CD4-positive, alpha-beta memory T cell (primary cell): ENCODE measurements at regions of chr6 and their contacts with region 1.

Region 1: GRCh38 chr6:32127717-32128592 is at the start of gene ATF6B:
- DNase-seq: peak; percentile 92 to 100 (median 98)
- H3K4me3 ChIP-seq: peak within 1 kb of the TSS; percentile 74 to 87
- H3K4me3 Mint-ChIP-seq: peak within 1 kb of the TSS; percentile 97 to 100 (median 99)
- H3K27ac ChIP-seq: peak within 1 kb of the TSS; percentile 83
- H3K27ac Mint-ChIP-seq: peak within 1 kb of the TSS; percentile 89 to 99 (median 99)
- H3K4me1 ChIP-seq: peaks cover 35% of the 10 kb centered on the region
- H3K4me1 Mint-ChIP-seq: peaks cover 33 to 57% (median 46%) of the 10 kb centered on the region in 4 donors
- H3K27me3 ChIP-seq: no peaks in the 10 kb centered on the region
- H3K27me3 Mint-ChIP-seq: peaks cover 0 to 2% of the 10 kb centered on the region in 2 donors
- total RNA-seq, gene ATF6B: 151 to 154 TPM

Region 2: DNA sequence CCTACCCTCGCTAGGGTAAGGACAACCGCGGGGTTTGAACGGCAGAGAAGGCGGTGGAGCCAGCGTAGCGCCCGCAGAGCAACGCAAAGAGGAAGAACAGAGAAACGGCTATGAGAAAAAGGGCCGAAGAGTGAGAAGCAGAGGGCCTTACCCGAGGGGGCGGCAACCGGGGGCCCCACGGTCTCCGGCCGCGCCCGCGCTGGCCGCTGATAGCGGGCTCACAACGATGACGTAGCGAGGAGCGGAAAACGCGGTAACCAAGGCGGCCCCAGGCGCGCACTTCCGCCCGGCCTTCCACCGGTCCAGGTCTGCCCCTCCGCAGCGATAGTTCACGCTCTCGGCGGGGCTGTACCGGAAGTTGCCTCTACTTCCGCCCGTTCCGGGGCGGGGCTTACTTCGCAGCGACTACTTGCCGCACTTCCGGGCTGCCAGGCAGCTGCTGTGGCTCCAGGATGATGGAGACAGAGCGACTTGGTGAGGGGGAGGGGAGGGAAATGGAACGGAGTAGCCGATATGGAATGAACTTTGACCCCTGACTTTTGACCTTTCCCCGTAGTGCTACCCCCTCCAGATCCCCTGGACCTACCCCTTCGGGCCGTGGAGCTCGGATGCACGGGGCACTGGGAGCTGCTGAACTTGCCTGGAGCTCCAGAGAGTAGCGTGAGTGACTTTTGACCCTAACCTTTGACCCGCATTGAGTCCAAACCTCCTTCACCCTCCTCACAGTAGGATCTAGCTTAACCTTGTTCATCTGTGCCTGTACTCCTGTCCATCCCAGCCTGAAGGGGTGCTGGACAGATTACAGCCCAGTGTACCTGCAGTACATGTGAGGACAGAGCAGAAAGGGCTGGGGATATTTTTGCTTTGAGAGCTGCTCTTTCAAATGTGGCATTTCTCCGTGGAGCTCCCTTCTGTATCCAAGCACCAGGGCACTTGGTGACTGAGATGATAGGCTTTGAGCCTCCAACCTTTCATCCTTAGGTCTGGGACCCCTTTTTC is 168.9 kb before region 1 on chr6 and contains the starts of genes NELFE and SKIC2:
- CTCF ChIA-PET with region 1: no interaction called
- POLR2A ChIA-PET with region 1: interaction called, 3 read pairs
- intact Hi-C with region 1: loop called (anchors 1 kb)
- DNase-seq: peak; percentile 98 to 99 (median 99)
- H3K4me3 ChIP-seq: peak within 1 kb of the TSS; percentile 95
- H3K4me3 Mint-ChIP-seq: peak within 1 kb of the TSS; percentile 92 to 98 (median 96)
- H3K27ac ChIP-seq: peak within 1 kb of the TSS; percentile 98
- H3K27ac Mint-ChIP-seq: peak within 1 kb of the TSS; percentile 97 to 99 (median 98)
- H3K4me1 ChIP-seq: peaks cover 35% of the 10 kb centered on the region
- H3K4me1 Mint-ChIP-seq: peaks cover 21 to 43% (median 32%) of the 10 kb centered on the region in 4 donors
- H3K27me3 ChIP-seq: no peaks in the 10 kb centered on the region
- H3K27me3 Mint-ChIP-seq: no peaks in the 10 kb centered on the region
- total RNA-seq, gene NELFE: 45.8 to 49.0 TPM
- total RNA-seq, gene SKIC2: 117 to 119 TPM

Region 3: DNA sequence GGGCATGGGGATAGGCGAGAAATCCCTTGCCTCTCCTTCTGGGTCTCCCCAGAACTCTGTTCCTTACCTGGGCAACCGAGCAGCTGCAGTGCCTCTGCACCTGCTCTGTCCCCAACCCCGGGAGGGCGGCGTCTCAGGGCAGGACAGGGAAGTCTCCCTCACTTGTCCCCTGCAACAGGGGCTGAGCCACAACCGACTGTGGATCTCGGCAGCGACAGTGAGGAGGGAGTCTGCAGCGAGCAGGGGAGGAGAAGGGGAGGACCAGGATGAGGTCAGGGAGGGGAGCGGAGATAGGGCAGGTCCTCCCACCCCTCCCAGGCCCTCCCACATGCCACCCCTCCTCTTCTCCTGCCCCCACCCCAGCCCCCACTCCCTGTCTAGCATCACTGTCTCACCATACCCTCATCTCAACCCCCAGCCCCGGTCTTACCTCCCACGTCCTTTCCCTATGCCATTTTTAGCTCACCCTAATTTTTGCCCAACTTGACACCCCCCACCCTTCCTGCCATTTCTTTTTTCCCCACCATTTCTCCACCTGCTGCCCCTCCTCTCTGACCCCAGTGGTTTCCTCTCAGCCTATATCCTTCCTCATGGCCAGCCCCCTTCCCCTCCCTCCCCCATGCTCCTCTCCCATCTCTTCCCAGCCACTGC is 18.7 kb before region 1 on chr6 and contains the start of gene TNXB:
- CTCF ChIA-PET with region 1: no interaction called
- POLR2A ChIA-PET with region 1: interaction called, 11 read pairs
- intact Hi-C with region 1: no loop called
- DNase-seq: no peak
- H3K4me3 ChIP-seq: no peak within 1 kb of the TSS
- H3K4me3 Mint-ChIP-seq: peak within 1 kb of the TSS in 2 of 8 donors; percentile 7 to 14
- H3K27ac ChIP-seq: no peak within 1 kb of the TSS
- H3K27ac Mint-ChIP-seq: peak within 1 kb of the TSS in 4 of 7 donors; percentile 38 to 63 (median 50)
- H3K4me1 ChIP-seq: peaks cover 15% of the 10 kb centered on the region
- H3K4me1 Mint-ChIP-seq: peaks cover 13 to 27% (median 20%) of the 10 kb centered on the region in 4 donors
- H3K27me3 ChIP-seq: no peaks in the 10 kb centered on the region
- H3K27me3 Mint-ChIP-seq: peaks cover 6 to 20% of the 10 kb centered on the region in 2 donors
- total RNA-seq, gene TNXB: 16.5 to 22.4 TPM

Region 4: DNA sequence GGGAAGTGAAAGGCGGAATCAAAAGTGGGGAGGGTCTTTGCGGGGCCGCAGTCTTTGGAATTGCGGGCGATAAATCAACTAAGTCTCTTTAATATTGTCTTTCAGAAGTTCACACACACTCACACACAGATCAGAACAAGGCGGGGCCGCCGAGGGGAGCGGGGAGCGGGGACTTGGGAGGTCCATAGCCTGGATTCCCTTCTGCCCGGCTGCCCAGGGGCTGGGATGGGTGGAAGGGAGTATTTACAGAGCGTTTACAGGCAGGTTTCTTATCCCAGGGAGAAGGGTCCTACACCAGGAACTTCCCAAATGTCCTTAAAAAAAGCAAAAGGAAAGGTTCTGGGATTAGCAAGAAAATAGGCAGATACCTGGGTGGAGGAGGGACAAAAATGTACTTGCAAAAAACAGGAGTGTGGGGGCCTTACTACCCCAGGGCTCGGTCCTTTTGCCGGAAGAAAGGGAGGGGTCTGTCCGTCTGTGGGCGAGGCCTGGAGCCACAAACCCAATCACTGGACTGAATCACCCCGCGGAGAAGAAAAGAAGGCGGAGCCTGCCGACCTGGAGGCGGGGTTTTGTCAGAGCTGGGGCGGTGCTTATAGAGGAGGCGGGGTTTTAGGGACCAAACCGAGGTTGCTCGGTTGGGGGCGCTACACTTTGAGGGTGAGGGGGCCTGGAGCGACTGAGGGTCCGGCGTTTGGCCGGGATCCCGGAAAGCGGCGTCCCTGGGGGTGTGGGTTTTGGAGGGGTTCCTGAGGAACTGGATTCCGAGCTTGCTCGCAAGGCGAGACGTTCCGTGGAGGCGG is 20.5 kb after region 1 on chr6:
- CTCF ChIA-PET with region 1: interaction called, 12 read pairs
- POLR2A ChIA-PET with region 1: interaction called, 6 read pairs
- intact Hi-C with region 1: loop called (anchors 2 kb)
- DNase-seq: peak; percentile 58 to 75 (median 66)
- H3K4me3 ChIP-seq: peak overlapping the region in 1 of 2 donors; percentile 38
- H3K4me3 Mint-ChIP-seq: peak overlapping the region; percentile 80 to 87 (median 85)
- H3K27ac ChIP-seq: no peak overlapping the region
- H3K27ac Mint-ChIP-seq: peak overlapping the region in 6 of 7 donors; percentile 17 to 86 (median 80)
- H3K4me1 ChIP-seq: peaks cover 3% of the 10 kb centered on the region
- H3K4me1 Mint-ChIP-seq: peaks cover 17 to 53% (median 32%) of the 10 kb centered on the region in 4 donors
- H3K27me3 ChIP-seq: peaks cover 6% of the 10 kb centered on the region
- H3K27me3 Mint-ChIP-seq: peaks cover 27 to 30% of the 10 kb centered on the region in 2 donors

Region 5: GRCh38 chr6:32177788-32178546 is 50.0 kb after region 1 on chr6 and contains the start of gene RNF5:
- CTCF ChIA-PET with region 1: interaction called, 3 read pairs
- POLR2A ChIA-PET with region 1: interaction called, 49 read pairs
- intact Hi-C with region 1: loop called (anchors 1 kb)
- DNase-seq: peak; percentile 96 to 99 (median 98)
- H3K4me3 ChIP-seq: peak within 1 kb of the TSS; percentile 74 to 87
- H3K4me3 Mint-ChIP-seq: peak within 1 kb of the TSS; percentile 92 to 100 (median 96)
- H3K27ac ChIP-seq: peak within 1 kb of the TSS; percentile 91
- H3K27ac Mint-ChIP-seq: peak within 1 kb of the TSS; percentile 97 to 100 (median 99)
- H3K4me1 ChIP-seq: peaks cover 79% of the 10 kb centered on the region
- H3K4me1 Mint-ChIP-seq: peaks cover 50 to 84% (median 66%) of the 10 kb centered on the region in 4 donors
- H3K27me3 ChIP-seq: no peaks in the 10 kb centered on the region
- H3K27me3 Mint-ChIP-seq: no peaks in the 10 kb centered on the region
- total RNA-seq, gene RNF5: 44.2 to 47.7 TPM